GM12878 (cell line): ENCODE measurements at regions of chr5 and their contacts with region 1.

Region 1: GRCh38 chr5:157130925-157131324 is 11.7 kb downstream of the MED7 start:
- DNase-seq: no peak
- ATAC-seq: peak; percentile 82
- H3K4me3 ChIP-seq: no peak overlapping the region
- H3K27ac ChIP-seq: no peak overlapping the region
- H3K4me1 ChIP-seq: peaks cover 5% of the 10 kb centered on the region; the same call in 1 of the 2 replicates
- H3K27me3 ChIP-seq: no peaks in the 10 kb centered on the region
- CTCF ChIP-seq: no peak
- EP300 ChIP-seq: no peak
- POLR2A ChIP-seq: no peak
- RAD21 ChIP-seq: peak; percentile 11; the same call in 1 of the 2 replicates

Region 2: GRCh38 chr5:155943516-155944407 is 1187.2 kb before region 1 on chr5:
- CTCF ChIA-PET with region 1: interaction called, 14 read pairs
- POLR2A ChIA-PET with region 1: no interaction called
- RAD21 ChIA-PET with region 1: interaction called, 9 read pairs
- SMC1A ChIA-PET with region 1: interaction called, 8 read pairs
- in situ Hi-C with region 1: loop called (anchors 10 kb)
- intact Hi-C with region 1: loop called (anchors 1 kb)
- DNase-seq: no peak
- ATAC-seq: peak; percentile 93
- H3K4me3 ChIP-seq: no peak overlapping the region
- H3K27ac ChIP-seq: no peak overlapping the region
- H3K4me1 ChIP-seq: no peaks in the 10 kb centered on the region
- H3K27me3 ChIP-seq: no peaks in the 10 kb centered on the region; a peak in 2 of 4 replicates
- CTCF ChIP-seq: peak; percentile 69 to 79 (median 76)
- EP300 ChIP-seq: no peak
- POLR2A ChIP-seq: no peak
- RAD21 ChIP-seq: peak; percentile 83

Region 3: DNA sequence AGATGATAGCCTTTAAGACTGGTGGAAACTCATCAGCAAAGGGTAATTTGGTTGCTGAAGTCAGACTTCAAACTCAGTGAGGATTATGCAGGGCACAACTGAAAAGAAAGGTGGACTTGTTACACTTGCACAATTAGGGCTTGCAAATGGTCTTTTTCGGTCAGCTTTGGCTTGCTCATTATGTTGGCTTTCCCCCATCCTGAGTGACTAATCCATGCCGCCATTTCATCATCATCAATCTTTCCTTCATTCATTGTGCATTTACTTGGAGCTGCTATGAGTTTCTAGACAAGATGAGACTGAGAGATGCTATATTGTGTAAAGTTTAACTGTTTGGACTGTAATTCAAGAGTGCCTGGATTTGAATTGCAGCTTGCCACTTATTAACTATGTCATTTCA is 415.6 kb before region 1 on chr5:
- CTCF ChIA-PET with region 1: no interaction called
- POLR2A ChIA-PET with region 1: no interaction called
- RAD21 ChIA-PET with region 1: no interaction called
- SMC1A ChIA-PET with region 1: interaction called, 4 read pairs
- in situ Hi-C with region 1: no loop called
- intact Hi-C with region 1: loop called (anchors 1 kb)
- DNase-seq: no peak
- ATAC-seq: no peak
- H3K4me3 ChIP-seq: no peak overlapping the region
- H3K27ac ChIP-seq: no peak overlapping the region
- H3K4me1 ChIP-seq: no peaks in the 10 kb centered on the region
- H3K27me3 ChIP-seq: no peaks in the 10 kb centered on the region; a peak in 1 of 4 replicates
- CTCF ChIP-seq: no peak
- EP300 ChIP-seq: no peak
- POLR2A ChIP-seq: no peak
- RAD21 ChIP-seq: no peak

Region 4: GRCh38 chr5:156835905-156836304 is 295.0 kb before region 1 on chr5:
- CTCF ChIA-PET with region 1: interaction called, 19 read pairs
- POLR2A ChIA-PET with region 1: no interaction called
- RAD21 ChIA-PET with region 1: interaction called, 3 read pairs
- SMC1A ChIA-PET with region 1: interaction called, 9 read pairs
- in situ Hi-C with region 1: no loop called
- intact Hi-C with region 1: no loop called
- DNase-seq: no peak
- ATAC-seq: peak; percentile 88
- H3K4me3 ChIP-seq: no peak overlapping the region
- H3K27ac ChIP-seq: no peak overlapping the region
- H3K4me1 ChIP-seq: no peaks in the 10 kb centered on the region; the same call in 1 of the 2 replicates
- H3K27me3 ChIP-seq: no peaks in the 10 kb centered on the region
- CTCF ChIP-seq: peak; percentile 32 to 47 (median 39); a peak in 5 of 6 replicates
- EP300 ChIP-seq: no peak
- POLR2A ChIP-seq: no peak
- RAD21 ChIP-seq: peak; percentile 43

Region 5: GRCh38 chr5:156942064-156942463 is 188.9 kb before region 1 on chr5:
- CTCF ChIA-PET with region 1: interaction called, 20 read pairs
- POLR2A ChIA-PET with region 1: no interaction called
- RAD21 ChIA-PET with region 1: interaction called, 12 read pairs
- SMC1A ChIA-PET with region 1: interaction called, 17 read pairs
- in situ Hi-C with region 1: no loop called
- intact Hi-C with region 1: no loop called
- DNase-seq: no peak
- ATAC-seq: peak; percentile 95
- H3K4me3 ChIP-seq: peak overlapping the region; percentile 8; the same call in 1 of the 2 replicates
- H3K27ac ChIP-seq: peak overlapping the region; percentile 52
- H3K4me1 ChIP-seq: peaks cover 17% of the 10 kb centered on the region
- H3K27me3 ChIP-seq: no peaks in the 10 kb centered on the region
- CTCF ChIP-seq: no peak
- EP300 ChIP-seq: no peak
- POLR2A ChIP-seq: no peak
- RAD21 ChIP-seq: no peak

Region 6: GRCh38 chr5:157108976-157109375 is 21.9 kb before region 1 on chr5 and contains the start of gene HAVCR2:
- CTCF ChIA-PET with region 1: interaction called, 51 read pairs
- POLR2A ChIA-PET with region 1: interaction called, 3 read pairs
- RAD21 ChIA-PET with region 1: no interaction called
- SMC1A ChIA-PET with region 1: interaction called, 54 read pairs
- in situ Hi-C with region 1: no loop called
- intact Hi-C with region 1: no loop called
- DNase-seq: peak; percentile 83
- ATAC-seq: peak; percentile 90
- H3K4me3 ChIP-seq: peak within 1 kb of the TSS; percentile 46
- H3K27ac ChIP-seq: peak within 1 kb of the TSS; percentile 87
- H3K4me1 ChIP-seq: peaks cover 12% of the 10 kb centered on the region
- H3K27me3 ChIP-seq: no peaks in the 10 kb centered on the region
- CTCF ChIP-seq: no peak
- EP300 ChIP-seq: 0 out of 4 replicates have a peak, but pooled peaks of 1 of the 2 experiments have one; percentile 0
- POLR2A ChIP-seq: 0 out of 2 replicates have a peak, but pooled peaks have one; percentile 41
- RAD21 ChIP-seq: no peak
- polyA plus RNA-seq, gene HAVCR2: 7.2 to 7.5 TPM

Region 7: GRCh38 chr5:157159209-157159751 is 28.4 kb after region 1 on chr5:
- CTCF ChIA-PET with region 1: no interaction called
- POLR2A ChIA-PET with region 1: no interaction called
- RAD21 ChIA-PET with region 1: no interaction called
- SMC1A ChIA-PET with region 1: no interaction called
- in situ Hi-C with region 1: no loop called
- intact Hi-C with region 1: no loop called
- DNase-seq: no peak
- ATAC-seq: no peak
- H3K4me3 ChIP-seq: no peak overlapping the region
- H3K27ac ChIP-seq: no peak overlapping the region
- H3K4me1 ChIP-seq: no peaks in the 10 kb centered on the region
- H3K27me3 ChIP-seq: no peaks in the 10 kb centered on the region; a peak in 1 of 4 replicates
- CTCF ChIP-seq: no peak
- EP300 ChIP-seq: no peak
- POLR2A ChIP-seq: no peak
- RAD21 ChIP-seq: no peak

Region 8: DNA sequence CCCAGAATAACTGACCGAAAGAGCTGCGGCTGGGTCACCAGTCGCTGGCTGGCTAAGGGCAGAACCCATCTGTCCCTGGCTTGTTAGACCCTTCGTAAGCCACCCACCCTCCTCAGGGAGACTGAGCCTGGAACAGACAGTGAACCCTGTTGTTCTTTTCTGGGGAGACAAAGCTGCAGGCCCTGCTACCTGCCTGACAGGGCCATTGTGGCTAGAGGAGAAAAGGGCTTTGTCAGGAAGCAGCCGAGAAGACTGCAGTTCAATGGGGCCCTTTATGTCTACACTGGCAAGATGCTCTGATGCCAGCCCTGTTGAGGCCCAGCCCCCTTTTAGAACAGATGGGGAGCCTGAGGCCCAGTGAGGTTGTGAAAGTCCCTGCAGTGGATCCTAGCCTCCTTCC is 325.4 kb after region 1 on chr5:
- CTCF ChIA-PET with region 1: no interaction called
- POLR2A ChIA-PET with region 1: no interaction called
- RAD21 ChIA-PET with region 1: no interaction called
- SMC1A ChIA-PET with region 1: no interaction called
- in situ Hi-C with region 1: no loop called
- intact Hi-C with region 1: no loop called
- DNase-seq: no peak
- ATAC-seq: no peak
- H3K4me3 ChIP-seq: no peak overlapping the region
- H3K27ac ChIP-seq: no peak overlapping the region
- H3K4me1 ChIP-seq: 0 out of 2 replicates have a peak, but pooled peaks cover 5% of the 10 kb centered on the region
- H3K27me3 ChIP-seq: no peaks in the 10 kb centered on the region; a peak in 2 of 4 replicates
- CTCF ChIP-seq: no peak
- EP300 ChIP-seq: no peak
- POLR2A ChIP-seq: no peak
- RAD21 ChIP-seq: no peak

Region 9: GRCh38 chr5:157476702-157477408 is 345.9 kb after region 1 on chr5:
- CTCF ChIA-PET with region 1: no interaction called
- POLR2A ChIA-PET with region 1: no interaction called
- RAD21 ChIA-PET with region 1: no interaction called
- SMC1A ChIA-PET with region 1: no interaction called
- in situ Hi-C with region 1: no loop called
- intact Hi-C with region 1: no loop called
- DNase-seq: no peak
- ATAC-seq: peak; percentile 85
- H3K4me3 ChIP-seq: no peak overlapping the region
- H3K27ac ChIP-seq: no peak overlapping the region
- H3K4me1 ChIP-seq: no peaks in the 10 kb centered on the region
- H3K27me3 ChIP-seq: no peaks in the 10 kb centered on the region
- CTCF ChIP-seq: peak; percentile 74 to 77 (median 77)
- EP300 ChIP-seq: no peak
- POLR2A ChIP-seq: no peak
- RAD21 ChIP-seq: peak; percentile 89